Activated T-helper 1 cell treated with anti-CD3 and anti-CD28 coated beads, Interleukin-12 subunit alpha, Interleukin-12 subunit beta, Interleukin-2, Interleukin-4 antibody, amounts not matched to agents 30 ng/mL and 10 ng/mL and 1 ng/mL, durations not matched to agents 14 hours and 24 hours and 36 hours (primary cell): ENCODE measurements at regions of chr12 and their contacts with region 1.

Region 1: GRCh38 chr12:12837025-12837872 is 24.1 kb downstream of the DDX47 start:
- DNase-seq: no peak
- H3K4me3 Mint-ChIP-seq: no peak overlapping the region
- H3K27ac Mint-ChIP-seq: peak overlapping the region; percentile 54
- H3K4me1 Mint-ChIP-seq: peaks cover 24% of the 10 kb centered on the region
- H3K27me3 Mint-ChIP-seq: no peaks in the 10 kb centered on the region

Region 2: DNA sequence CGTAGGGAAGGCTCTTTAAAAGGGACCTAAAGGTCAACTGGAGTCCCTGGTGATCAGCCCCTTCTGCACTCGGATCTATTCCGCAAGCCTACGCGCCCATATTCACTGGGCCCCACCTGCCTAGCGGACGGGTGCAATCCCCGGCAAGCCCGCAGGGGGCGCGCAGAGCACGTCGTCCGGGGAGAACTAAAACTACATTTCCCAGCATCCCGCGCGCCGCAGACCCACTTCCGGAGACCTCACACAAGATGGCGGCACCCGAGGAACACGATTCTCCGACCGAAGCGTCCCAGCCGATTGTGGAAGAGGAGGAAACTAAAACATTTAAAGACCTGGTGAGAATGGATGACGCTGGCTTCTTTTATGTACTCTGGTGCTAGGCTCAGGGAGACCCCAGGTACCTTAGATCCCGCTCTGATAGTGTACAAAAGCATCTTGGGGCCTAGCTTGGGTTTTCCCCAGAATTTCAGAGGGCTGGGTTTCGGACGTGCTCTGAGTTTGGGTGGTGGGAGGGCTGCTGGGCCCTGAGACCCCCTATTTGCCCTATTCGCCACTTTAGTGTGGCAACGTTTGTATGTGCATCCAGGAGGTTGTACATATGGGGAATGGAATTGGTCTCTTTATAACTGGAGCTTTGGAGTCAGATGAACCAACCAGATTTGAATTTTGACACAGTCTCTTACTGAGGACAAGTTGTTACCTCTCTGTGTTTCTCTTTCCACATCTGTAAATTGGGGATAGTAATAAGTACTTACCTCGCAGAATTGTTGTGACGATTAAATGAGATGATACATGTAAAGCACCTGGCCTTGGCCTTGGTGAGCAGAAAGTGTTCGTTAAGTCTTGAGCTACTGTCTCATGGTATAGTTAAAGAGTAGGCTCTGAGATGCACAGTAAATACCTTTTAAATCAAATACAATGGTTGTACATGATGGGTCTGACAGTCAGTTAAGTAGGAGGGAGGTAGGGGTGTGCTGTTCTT is 23.8 kb before region 1 on chr12 and contains the start of gene DDX47:
- intact Hi-C with region 1: loop called (anchors 2 kb)
- DNase-seq: peak; percentile 94
- H3K4me3 Mint-ChIP-seq: peak within 1 kb of the TSS; percentile 85
- H3K27ac Mint-ChIP-seq: peak within 1 kb of the TSS; percentile 81
- H3K4me1 Mint-ChIP-seq: peaks cover 52% of the 10 kb centered on the region
- H3K27me3 Mint-ChIP-seq: no peaks in the 10 kb centered on the region
- total RNA-seq, gene DDX47: 120 and 127 TPM in 2 replicates

Region 3: GRCh38 chr12:12853435-12853834 is 16.2 kb after region 1 on chr12:
- intact Hi-C with region 1: no loop called
- DNase-seq: no peak
- H3K4me3 Mint-ChIP-seq: no peak overlapping the region
- H3K27ac Mint-ChIP-seq: no peak overlapping the region
- H3K4me1 Mint-ChIP-seq: no peaks in the 10 kb centered on the region
- H3K27me3 Mint-ChIP-seq: no peaks in the 10 kb centered on the region

Region 4: GRCh38 chr12:12890815-12891645 is 53.8 kb after region 1 on chr12 and contains the start of gene GPRC5A:
- intact Hi-C with region 1: loop called (anchors 1 kb)
- DNase-seq: no peak
- H3K4me3 Mint-ChIP-seq: peak within 1 kb of the TSS; percentile 71
- H3K27ac Mint-ChIP-seq: no peak within 1 kb of the TSS
- H3K4me1 Mint-ChIP-seq: peaks cover 9% of the 10 kb centered on the region
- H3K27me3 Mint-ChIP-seq: peaks cover 51% of the 10 kb centered on the region
- total RNA-seq, gene GPRC5A: not detected in 2 replicates

Region 5: GRCh38 chr12:12899530-12900380 is 62.5 kb after region 1 on chr12:
- intact Hi-C with region 1: loop called (anchors 1 kb)
- DNase-seq: peak; percentile 26
- H3K4me3 Mint-ChIP-seq: no peak overlapping the region
- H3K27ac Mint-ChIP-seq: peak overlapping the region; percentile 37
- H3K4me1 Mint-ChIP-seq: peaks cover 13% of the 10 kb centered on the region
- H3K27me3 Mint-ChIP-seq: peaks cover 12% of the 10 kb centered on the region

Region 6: DNA sequence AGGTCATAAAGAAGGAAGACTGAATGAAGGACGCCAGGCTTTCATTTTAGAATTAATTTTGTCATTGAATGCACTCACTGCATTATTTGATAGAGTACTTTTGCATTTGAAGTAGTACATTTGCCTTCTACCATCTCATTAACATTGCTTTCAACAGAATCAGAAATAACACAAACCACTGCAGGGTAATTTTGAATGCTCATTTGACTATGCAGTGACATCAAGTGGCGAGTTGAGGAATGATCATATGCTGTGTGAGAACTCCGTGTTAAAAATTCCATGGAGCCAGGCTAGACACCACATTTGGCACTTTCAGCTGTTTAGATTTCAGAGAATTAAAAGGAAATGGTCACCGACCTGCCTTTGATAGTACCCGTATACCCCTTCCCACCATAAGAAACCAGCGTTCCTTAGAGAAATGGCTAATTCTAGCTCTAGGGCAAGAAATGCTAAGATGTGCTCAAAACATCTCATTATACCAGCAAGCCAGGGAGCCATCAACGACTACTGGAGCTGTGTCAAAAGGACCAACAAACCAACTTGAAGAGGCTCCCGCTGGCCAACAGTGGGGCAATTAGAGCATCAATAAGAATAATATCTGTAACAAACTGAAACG is 146.3 kb after region 1 on chr12:
- intact Hi-C with region 1: loop called (anchors 5 kb)
- DNase-seq: no peak
- H3K4me3 Mint-ChIP-seq: no peak overlapping the region
- H3K27ac Mint-ChIP-seq: no peak overlapping the region
- H3K4me1 Mint-ChIP-seq: no peaks in the 10 kb centered on the region
- H3K27me3 Mint-ChIP-seq: no peaks in the 10 kb centered on the region